ENCODE measurements at regions of chr5 and their contacts with region 1.

Region 1: DNA sequence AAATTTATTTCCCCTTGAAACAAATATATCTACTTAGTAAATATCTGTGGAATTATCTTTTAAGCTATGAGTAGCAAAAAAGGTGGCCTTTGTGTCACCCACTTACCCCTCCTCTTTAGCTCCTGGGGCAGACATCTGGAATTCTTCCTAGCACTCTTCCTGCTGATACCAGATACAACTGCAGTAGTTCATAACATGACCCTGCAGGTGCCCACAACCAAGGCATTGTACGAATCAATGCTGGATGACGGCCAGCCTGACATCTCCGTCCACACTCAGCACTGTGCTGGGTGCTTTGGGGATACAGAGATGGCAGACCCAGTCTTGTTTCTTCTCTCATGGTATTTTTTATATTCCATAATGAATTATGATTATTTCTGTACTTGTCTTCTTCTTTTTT is 152.3 kb downstream of the GOLPH3 start:
- DNase-seq: no peak

Region 2: GRCh38 chr5:31186672-31187267 is 835.0 kb before region 1 on chr5:
- intact Hi-C with region 1: no loop called
- DNase-seq: no peak

Region 3: GRCh38 chr5:32004404-32004803 is 17.4 kb before region 1 on chr5:
- intact Hi-C with region 1: loop called in 1 of 2 experiments (anchors 1 kb)
- DNase-seq: no peak

Region 4: DNA sequence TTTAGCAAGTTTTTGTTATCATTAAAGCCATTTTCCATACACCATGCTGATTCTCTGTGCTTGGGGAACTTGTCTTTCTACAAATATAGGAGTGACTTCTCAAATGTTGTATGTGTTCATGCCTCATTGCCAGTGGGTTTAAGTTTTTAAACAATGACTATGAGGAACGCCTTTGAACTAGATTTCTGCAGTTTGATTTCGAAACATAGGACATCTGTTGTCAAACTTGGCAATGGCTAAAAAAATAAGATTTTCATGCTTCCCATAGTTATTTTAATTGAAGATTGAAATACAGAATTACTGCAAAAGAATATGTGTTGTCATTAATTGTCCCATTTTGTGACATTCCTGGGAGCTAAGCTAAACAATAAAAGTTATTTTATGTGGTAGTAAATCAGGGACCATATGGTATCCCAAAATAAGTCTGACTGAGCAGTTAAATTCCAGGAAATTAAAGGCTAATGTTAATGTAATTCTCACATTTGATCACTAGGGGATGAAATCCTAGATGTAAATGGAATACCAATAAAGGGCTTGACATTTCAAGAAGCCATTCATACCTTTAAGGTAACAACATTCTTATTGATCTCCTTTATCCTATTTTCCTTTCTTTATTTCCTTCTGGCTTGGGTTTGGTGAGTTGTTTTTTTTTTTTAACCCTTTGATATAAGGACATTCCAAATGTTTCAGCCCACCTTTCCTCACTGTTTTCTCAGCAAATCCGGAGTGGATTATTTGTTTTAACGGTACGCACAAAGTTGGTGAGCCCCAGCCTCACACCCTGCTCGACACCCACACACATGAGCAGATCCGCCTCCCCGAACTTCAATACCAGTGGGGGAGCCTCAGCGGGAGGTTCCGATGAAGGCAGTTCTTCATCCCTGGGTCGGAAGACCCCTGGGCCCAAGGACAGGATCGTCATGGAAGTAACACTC is 35.7 kb after region 1 on chr5:
- intact Hi-C with region 1: loop called in 1 of 2 experiments (anchors 1 kb)
- DNase-seq: no peak